Sigmoid colon (tissue), 7 donors: ENCODE measurements at regions of chr22 and their contacts with region 1.

Region 1: GRCh38 chr22:38862375-38863329 is 9.4 kb downstream of the CBX6 start:
- DNase-seq: peak; percentile 87
- H3K4me3 ChIP-seq: no peak overlapping the region
- H3K27ac ChIP-seq: peak overlapping the region; percentile 52 to 81 (median 66)
- H3K4me1 ChIP-seq: peaks cover 0 to 67% (median 61%) of the 10 kb centered on the region in 4 donors
- H3K27me3 ChIP-seq: no peaks in the 10 kb centered on the region
- CTCF ChIP-seq: no peak
- EP300 ChIP-seq: no peak
- POLR2A ChIP-seq: no peak

Region 2: GRCh38 chr22:38774496-38775166 is 88.0 kb before region 1 on chr22:
- intact Hi-C with region 1: loop called (anchors 5 kb)
- DNase-seq: no peak
- H3K4me3 ChIP-seq: no peak overlapping the region
- H3K27ac ChIP-seq: no peak overlapping the region
- H3K4me1 ChIP-seq: no peaks in the 10 kb centered on the region
- H3K27me3 ChIP-seq: no peaks in the 10 kb centered on the region
- CTCF ChIP-seq: no peak
- EP300 ChIP-seq: no peak
- POLR2A ChIP-seq: no peak

Region 3: DNA sequence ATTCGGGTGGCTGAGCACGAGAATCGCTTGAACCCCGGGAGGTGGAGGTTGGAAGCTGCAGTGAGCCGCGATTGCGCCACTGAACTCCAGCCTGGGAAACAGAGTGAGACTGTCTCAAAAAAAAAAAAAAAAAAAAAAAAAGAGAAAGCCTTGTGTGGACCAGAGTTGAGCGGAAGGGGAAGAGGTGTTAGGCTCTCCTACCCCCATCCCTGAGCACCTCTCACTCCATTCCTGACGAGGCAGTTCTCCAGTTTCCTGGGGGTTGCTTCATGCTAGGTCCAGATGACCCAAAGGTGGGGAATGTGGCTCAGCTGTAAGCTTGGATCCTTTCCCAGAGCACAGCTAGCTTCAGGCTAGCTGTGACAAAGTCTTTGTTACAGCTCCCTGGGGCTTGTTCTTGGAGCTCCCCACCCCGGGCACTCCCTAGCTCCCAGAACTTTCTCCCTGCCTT is 60.0 kb before region 1 on chr22:
- intact Hi-C with region 1: no loop called
- DNase-seq: peak; percentile 85
- H3K4me3 ChIP-seq: no peak overlapping the region
- H3K27ac ChIP-seq: no peak overlapping the region
- H3K4me1 ChIP-seq: peaks cover 0 to 7% (median 0%) of the 10 kb centered on the region in 4 donors
- H3K27me3 ChIP-seq: peaks cover 0 to 3% (median 0%) of the 10 kb centered on the region in 3 donors
- CTCF ChIP-seq: no peak
- EP300 ChIP-seq: no peak
- POLR2A ChIP-seq: no peak

Region 4: DNA sequence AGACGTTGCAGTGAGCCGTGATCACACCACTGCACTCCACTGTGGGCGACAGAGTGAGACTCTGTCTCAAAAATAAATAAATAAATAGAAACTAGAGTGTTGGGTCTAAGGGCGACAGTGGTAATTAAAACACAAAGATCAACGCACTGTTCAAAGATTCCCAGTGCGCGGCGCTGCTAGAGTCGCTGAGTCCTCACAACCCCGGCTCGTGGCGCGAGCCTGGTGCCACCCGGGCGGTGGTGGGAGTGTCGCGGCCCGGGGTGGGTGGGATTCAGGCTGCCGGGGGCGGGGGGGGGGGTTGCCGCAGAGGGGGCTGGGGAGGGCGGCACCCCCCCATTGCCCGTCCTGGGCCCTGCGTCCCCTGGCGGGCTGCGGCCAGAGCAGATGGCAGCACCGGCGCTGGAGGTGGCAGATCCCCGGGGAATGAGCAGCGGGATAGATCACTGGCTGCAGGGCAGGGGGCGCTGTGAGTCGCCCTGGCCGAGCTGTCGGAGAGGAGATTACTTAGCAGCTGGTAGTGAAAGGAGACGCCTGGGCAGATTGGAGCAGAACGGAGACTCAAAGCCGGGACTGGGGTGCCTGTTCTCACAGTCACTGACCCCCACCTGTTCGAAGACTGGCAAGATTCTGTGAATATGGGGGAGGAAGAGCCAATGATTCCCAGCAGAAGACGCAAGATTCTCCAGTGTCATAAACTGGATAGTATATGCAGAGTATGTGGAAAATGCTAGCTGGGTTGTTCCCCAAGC is 64.6 kb after region 1 on chr22:
- intact Hi-C with region 1: no loop called
- DNase-seq: peak; percentile 89
- H3K4me3 ChIP-seq: peak overlapping the region; percentile 17 to 53 (median 44)
- H3K27ac ChIP-seq: peak overlapping the region; percentile 66 to 90 (median 77)
- H3K4me1 ChIP-seq: peaks cover 0 to 33% (median 28%) of the 10 kb centered on the region in 4 donors
- H3K27me3 ChIP-seq: no peaks in the 10 kb centered on the region
- CTCF ChIP-seq: peak; percentile 55 to 81 (median 62)
- EP300 ChIP-seq: no peak
- POLR2A ChIP-seq: no peak